ENCODE measurements at regions of chrX and their contacts with region 1.

Region 1: GRCh38 chrX:130079824-130080406 is 30.4 kb downstream of the ELF4 start:
- DNase-seq: peak; percentile 50
- ATAC-seq: peak; percentile 78
- H3K4me3 ChIP-seq: no peak overlapping the region
- H3K27ac ChIP-seq: no peak overlapping the region
- H3K4me1 ChIP-seq: peaks cover 9% of the 10 kb centered on the region
- H3K27me3 ChIP-seq: no peaks in the 10 kb centered on the region
- CTCF ChIP-seq: peak; percentile 81
- EP300 ChIP-seq: no peak
- POLR2A ChIP-seq: no peak
- RAD21 ChIP-seq: peak; percentile 65

Region 2: GRCh38 chrX:130120746-130121504 is 41.0 kb after region 1 on chrX:
- CTCF ChIA-PET with region 1: interaction called, 6 read pairs
- POLR2A ChIA-PET with region 1: no interaction called
- in situ Hi-C with region 1: loop called (anchors 5 kb)
- intact Hi-C with region 1: loop called (anchors 1 kb)
- DNase-seq: peak; percentile 33
- ATAC-seq: peak; percentile 87
- H3K4me3 ChIP-seq: peak overlapping the region; percentile 26 to 70 (median 49); a peak in 5 of 6 replicates
- H3K27ac ChIP-seq: no peak overlapping the region
- H3K4me1 ChIP-seq: peaks cover 32% of the 10 kb centered on the region
- H3K27me3 ChIP-seq: no peaks in the 10 kb centered on the region
- CTCF ChIP-seq: peak; percentile 79
- EP300 ChIP-seq: no peak
- POLR2A ChIP-seq: no peak
- RAD21 ChIP-seq: peak; percentile 74

Region 3: GRCh38 chrX:130190801-130191200 is 110.9 kb after region 1 on chrX:
- CTCF ChIA-PET with region 1: interaction called, 7 read pairs
- POLR2A ChIA-PET with region 1: no interaction called
- in situ Hi-C with region 1: loop called (anchors 5 kb)
- intact Hi-C with region 1: loop called (anchors 1 kb)
- DNase-seq: no peak
- ATAC-seq: no peak
- H3K4me3 ChIP-seq: no peak overlapping the region
- H3K27ac ChIP-seq: no peak overlapping the region
- H3K4me1 ChIP-seq: peaks cover 13% of the 10 kb centered on the region
- H3K27me3 ChIP-seq: no peaks in the 10 kb centered on the region
- CTCF ChIP-seq: no peak
- EP300 ChIP-seq: no peak
- POLR2A ChIP-seq: no peak
- RAD21 ChIP-seq: no peak

Region 4: DNA sequence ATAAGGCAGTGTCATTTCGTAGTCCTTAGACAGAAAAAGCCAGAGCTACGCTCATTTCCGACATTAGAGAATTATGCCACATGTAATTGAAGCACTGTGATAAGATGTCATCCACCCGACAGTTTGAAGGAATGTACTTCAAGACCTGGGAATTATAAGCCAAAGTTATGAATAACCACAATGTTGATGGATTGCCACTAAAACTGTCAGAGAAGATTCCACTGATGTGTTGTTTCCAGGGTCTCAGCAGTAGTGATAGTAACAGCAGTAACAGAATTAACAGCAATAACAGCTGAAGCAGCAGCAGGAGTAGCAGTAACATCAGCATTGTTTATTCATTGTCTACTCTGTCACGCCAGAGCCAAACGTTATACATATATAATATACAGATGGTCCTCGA is 116.6 kb after region 1 on chrX:
- CTCF ChIA-PET with region 1: interaction called, 7 read pairs
- POLR2A ChIA-PET with region 1: no interaction called
- in situ Hi-C with region 1: loop called (anchors 5 kb)
- intact Hi-C with region 1: loop called (anchors 1 kb)
- DNase-seq: no peak
- ATAC-seq: no peak
- H3K4me3 ChIP-seq: no peak overlapping the region
- H3K27ac ChIP-seq: no peak overlapping the region
- H3K4me1 ChIP-seq: peaks cover 13% of the 10 kb centered on the region
- H3K27me3 ChIP-seq: no peaks in the 10 kb centered on the region
- CTCF ChIP-seq: no peak
- EP300 ChIP-seq: no peak
- POLR2A ChIP-seq: no peak
- RAD21 ChIP-seq: no peak